HCT116 (cell line): ENCODE measurements at regions of chr19 and their contacts with region 1.

Region 1: GRCh38 chr19:43743022-43743421 is 11.7 kb downstream of the SMG9 start:
- DNase-seq: no peak
- ATAC-seq: no peak
- H3K4me3 ChIP-seq: no peak overlapping the region
- H3K27ac ChIP-seq: no peak overlapping the region
- H3K4me1 ChIP-seq: peaks cover 20 to 26% of the 10 kb centered on the region in 2 experiments
- H3K27me3 ChIP-seq: no peaks in the 10 kb centered on the region
- CTCF ChIP-seq: no peak
- POLR2A ChIP-seq: no peak
- RAD21 ChIP-seq: no peak

Region 2: DNA sequence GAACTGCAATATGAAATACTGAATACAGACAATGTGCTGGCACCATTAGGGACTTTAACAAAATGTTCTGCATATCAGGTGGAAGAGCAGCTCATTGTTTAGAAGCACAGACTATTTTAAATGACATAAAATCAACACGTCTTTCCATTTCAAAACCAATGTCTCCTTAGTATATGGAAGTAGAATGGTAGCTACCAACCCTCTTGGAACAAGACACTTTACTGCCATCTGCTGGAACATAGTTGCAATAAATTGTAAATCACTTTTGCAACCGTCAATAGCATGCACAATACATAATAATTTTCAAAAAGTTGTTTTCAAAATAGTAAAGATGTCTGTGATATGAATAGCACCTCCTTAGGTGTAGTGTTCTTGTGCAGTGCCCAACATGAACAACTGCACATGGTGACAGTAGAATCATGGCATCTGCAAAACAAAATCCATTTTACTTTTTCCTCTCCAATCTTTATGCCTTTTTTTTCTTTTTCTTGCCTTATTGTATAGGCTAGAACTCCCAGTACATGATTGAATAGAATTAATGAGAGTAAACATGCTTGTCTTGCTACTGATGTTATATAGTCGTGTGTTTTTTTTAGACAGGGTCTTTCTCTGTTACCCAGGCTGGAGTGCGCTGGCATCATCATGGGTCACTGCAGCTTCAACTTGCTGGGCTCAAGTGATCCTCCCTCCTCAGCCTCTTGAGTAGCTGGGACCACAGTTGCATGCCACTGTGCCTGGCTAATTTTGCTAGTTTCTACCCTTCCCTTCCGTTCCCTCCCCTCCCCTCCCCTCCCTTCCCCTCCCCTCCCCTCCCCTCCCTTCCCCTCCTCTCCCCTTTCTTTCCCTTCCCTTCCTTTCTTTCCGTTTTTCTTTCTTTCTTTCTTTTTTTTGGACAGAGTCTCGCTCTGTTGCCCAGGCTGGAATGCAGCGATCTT is 67.0 kb after region 1 on chr19:
- CTCF ChIA-PET with region 1: interaction called, 69 read pairs
- POLR2A ChIA-PET with region 1: interaction called, 6 read pairs
- RAD21 ChIA-PET with region 1: interaction called, 4 to 12 read pairs
- intact Hi-C with region 1: loop called (anchors 1 kb)
- DNase-seq: peak; percentile 63
- ATAC-seq: peak; percentile 92
- H3K4me3 ChIP-seq: no peak overlapping the region
- H3K27ac ChIP-seq: no peak overlapping the region
- H3K4me1 ChIP-seq: peaks cover 0 to 6% of the 10 kb centered on the region in 2 experiments; a peak in 1 of 4 replicates
- H3K27me3 ChIP-seq: no peaks in the 10 kb centered on the region
- CTCF ChIP-seq: peak; percentile 55 to 79 (median 71); a peak in 5 of 6 replicates
- POLR2A ChIP-seq: no peak
- RAD21 ChIP-seq: peak; percentile 90